Gastrocnemius medialis (tissue), 4 donors: ENCODE measurements at regions of chr4 and their contacts with region 1.

Region 1: DNA sequence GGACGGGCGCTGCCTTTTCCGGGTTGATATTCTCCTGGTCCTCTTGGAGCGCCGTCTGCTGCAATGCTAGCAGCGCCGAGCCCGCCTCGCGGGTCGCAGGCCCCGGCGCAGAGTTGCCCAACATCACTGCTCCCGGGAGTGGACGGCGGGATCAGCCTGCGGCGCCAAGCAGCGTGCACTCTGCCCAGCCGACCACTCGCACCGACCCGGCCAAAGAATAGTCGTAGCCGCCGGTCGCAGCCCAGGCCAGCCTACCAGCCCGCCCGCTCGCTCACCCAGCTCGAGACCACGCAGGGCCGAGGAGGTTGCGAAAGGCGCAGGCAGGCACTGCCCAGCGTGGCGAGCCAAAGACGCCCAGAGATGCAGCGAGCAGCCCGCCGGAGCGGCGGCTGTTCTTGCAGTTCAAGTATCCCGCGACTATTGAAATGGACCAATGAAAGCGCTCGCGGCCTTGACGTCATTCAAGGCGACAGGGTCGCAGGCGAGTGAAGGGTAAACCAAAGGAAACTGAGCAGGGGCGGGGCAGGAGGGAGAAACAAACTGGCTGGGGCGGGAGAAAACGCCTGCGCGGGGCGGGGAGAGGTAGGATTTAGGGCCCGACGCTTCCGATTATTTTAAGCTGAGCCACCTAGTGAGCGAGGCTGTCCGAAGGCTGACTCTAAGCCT is at the start of gene CCNA2:
- DNase-seq: peak; percentile 95
- ATAC-seq: peak; percentile 99 to 100
- H3K4me3 ChIP-seq: peak within 1 kb of the TSS; percentile 54 to 67 (median 63)
- H3K27ac ChIP-seq: peak within 1 kb of the TSS; percentile 77 to 83 (median 80)
- H3K4me1 ChIP-seq: peaks cover 0 to 17% of the 10 kb centered on the region in 2 donors
- H3K27me3 ChIP-seq: no peaks in the 10 kb centered on the region
- CTCF ChIP-seq: no peak
- POLR2A ChIP-seq: peak in 1 of 2 donors; percentile 57
- total RNA-seq, gene CCNA2: 0.20 to 0.60 (median 0.36) TPM in 3 of 4 donors, not detected in the other

Region 2: GRCh38 chr4:121696581-121697461 is 126.8 kb before region 1 on chr4 and contains the start of gene ANXA5:
- in situ Hi-C with region 1: no loop called
- intact Hi-C with region 1: loop called (anchors 2 kb)
- DNase-seq: peak; percentile 70 to 84
- ATAC-seq: peak; percentile 88 to 90
- H3K4me3 ChIP-seq: peak within 1 kb of the TSS; percentile 85 to 98 (median 94)
- H3K27ac ChIP-seq: peak within 1 kb of the TSS; percentile 89 to 97 (median 94)
- H3K4me1 ChIP-seq: peaks cover 27 to 40% of the 10 kb centered on the region in 2 donors
- H3K27me3 ChIP-seq: no peaks in the 10 kb centered on the region
- CTCF ChIP-seq: peak in 4 of 5 experiments; percentile 31 to 54 (median 38)
- POLR2A ChIP-seq: peak; percentile 76 to 77
- total RNA-seq, gene ANXA5: 59.2 to 181 (median 88.0) TPM

Region 3: DNA sequence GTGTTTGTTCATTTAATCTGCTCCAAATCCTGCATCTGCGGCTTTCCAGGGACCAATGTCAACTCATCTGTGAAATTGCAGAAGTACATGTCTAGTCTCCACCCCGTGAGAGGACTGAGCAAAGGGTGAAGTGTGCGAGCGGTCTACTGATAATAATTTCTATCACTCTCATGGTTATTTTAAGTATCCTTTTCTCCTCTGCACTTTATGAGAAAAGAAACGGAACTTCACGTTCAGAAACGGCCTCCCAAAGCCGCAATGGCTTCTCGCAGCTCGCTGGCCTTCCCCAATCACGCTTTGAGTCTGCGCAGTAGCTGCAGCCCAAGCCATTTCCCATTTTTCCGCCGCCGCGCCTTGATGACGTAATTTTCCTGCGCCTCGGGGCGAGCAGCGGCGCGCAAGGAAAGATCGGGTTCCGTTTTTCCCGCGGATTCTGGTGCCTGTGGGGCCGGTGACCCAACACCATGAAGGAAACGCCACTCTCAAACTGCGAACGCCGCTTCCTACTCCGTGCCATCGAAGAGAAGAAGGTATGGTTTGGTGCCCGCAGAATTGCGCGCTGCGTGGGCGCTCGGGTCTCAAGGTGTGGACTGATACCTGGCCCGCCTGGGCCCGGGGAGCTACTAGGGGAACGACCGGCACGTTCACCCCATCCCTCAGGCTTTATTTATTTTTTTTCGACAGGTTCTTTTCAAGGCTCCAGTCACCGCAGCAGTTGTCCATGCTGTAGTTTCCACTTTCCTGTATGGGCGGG is 22.5 kb before region 1 on chr4 and contains the start of gene EXOSC9:
- in situ Hi-C with region 1: no loop called
- intact Hi-C with region 1: loop called (anchors 1 kb)
- DNase-seq: peak; percentile 83 to 89
- ATAC-seq: peak; percentile 98
- H3K4me3 ChIP-seq: peak within 1 kb of the TSS; percentile 82 to 95 (median 89)
- H3K27ac ChIP-seq: peak within 1 kb of the TSS; percentile 84 to 95 (median 88)
- H3K4me1 ChIP-seq: peaks cover 17 to 20% of the 10 kb centered on the region in 2 donors
- H3K27me3 ChIP-seq: no peaks in the 10 kb centered on the region
- CTCF ChIP-seq: no peak
- POLR2A ChIP-seq: peak; percentile 44 to 52
- total RNA-seq, gene EXOSC9: 13.4 to 28.8 (median 19.9) TPM

Region 4: GRCh38 chr4:121869841-121870656 is 46.4 kb after region 1 on chr4 and contains the start of gene BBS7:
- in situ Hi-C with region 1: no loop called
- intact Hi-C with region 1: loop called (anchors 2 kb)
- DNase-seq: peak; percentile 91 to 93
- ATAC-seq: peak; percentile 98
- H3K4me3 ChIP-seq: peak within 1 kb of the TSS; percentile 78 to 98 (median 96)
- H3K27ac ChIP-seq: peak within 1 kb of the TSS; percentile 83 to 90 (median 90)
- H3K4me1 ChIP-seq: peaks cover 0 to 4% of the 10 kb centered on the region in 2 donors
- H3K27me3 ChIP-seq: no peaks in the 10 kb centered on the region
- CTCF ChIP-seq: no peak
- POLR2A ChIP-seq: peak in 1 of 2 donors; percentile 64
- total RNA-seq, gene BBS7: 4.5 to 11.1 (median 6.7) TPM

Region 5: DNA sequence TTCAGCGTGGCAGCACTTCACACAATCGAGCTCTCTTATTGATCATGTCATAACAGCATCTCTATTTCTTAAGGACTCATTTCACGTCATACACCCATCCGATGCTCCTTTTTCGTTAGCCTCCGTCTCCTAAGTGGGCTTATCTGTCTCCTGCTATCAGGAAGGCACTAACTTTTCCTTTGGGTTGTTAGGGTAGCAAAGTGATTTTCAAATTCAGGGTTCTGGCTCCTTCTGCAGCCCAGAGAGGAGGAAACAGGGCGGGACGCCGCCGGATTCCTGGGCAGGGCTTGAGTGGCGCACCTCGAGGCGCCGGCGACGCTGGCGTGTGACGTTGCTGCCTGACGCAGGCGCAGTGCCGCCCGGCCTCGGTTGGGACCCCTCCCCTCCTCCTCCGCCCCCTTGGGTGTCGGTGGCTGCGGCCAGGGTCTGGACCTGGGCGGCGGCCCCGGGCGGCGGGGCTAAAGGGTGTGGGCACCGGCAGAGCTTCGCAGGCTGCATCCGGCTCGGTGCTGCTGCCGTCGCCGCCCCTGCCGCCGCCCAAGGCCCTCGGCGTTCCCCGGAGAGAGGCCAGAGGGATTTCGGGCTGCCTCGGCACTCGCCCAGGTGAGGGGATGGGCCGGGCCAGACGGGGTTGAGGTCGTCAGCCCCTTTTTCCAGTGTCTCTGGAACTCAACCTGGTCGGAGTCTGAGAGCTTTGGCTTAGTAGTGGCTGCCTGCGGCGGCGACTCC is 328.5 kb after region 1 on chr4 and contains the start of gene BLTP1:
- in situ Hi-C with region 1: loop called in 1 of 4 experiments (anchors 25 kb)
- intact Hi-C with region 1: no loop called
- DNase-seq: peak; percentile 71 to 76
- ATAC-seq: peak; percentile 89 to 93
- H3K4me3 ChIP-seq: peak within 1 kb of the TSS; percentile 85 to 99 (median 94)
- H3K27ac ChIP-seq: peak within 1 kb of the TSS; percentile 84 to 97 (median 94)
- H3K4me1 ChIP-seq: peaks cover 21 to 24% of the 10 kb centered on the region in 2 donors
- H3K27me3 ChIP-seq: no peaks in the 10 kb centered on the region
- CTCF ChIP-seq: no peak
- POLR2A ChIP-seq: peak; percentile 32 to 40
- total RNA-seq, gene BLTP1: 37.2 to 77.1 (median 42.5) TPM